Left cardiac atrium (tissue), 4 donors: ENCODE measurements at regions of chr22 and their contacts with region 1.

Region 1: DNA sequence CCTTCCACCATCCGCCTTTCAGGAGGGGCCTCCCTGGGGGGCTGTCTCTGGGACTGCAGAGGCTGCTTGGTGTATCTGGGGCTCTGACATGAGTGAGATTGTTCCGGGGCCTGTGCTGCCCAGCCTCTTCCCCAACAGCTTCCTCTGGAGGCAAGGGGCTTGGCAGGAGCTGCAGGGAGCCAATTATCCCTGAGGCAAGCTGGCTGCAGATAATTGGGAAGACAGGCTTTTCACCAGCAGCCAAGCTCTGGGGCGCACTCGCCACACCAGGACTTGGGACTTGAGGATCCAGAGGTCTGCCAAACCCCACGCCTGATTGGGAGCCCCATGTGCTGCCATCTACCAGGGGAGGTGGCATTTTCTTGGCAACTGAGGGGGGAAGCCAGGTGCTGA is 15.6 kb upstream of the RTN4R start:
- DNase-seq: no peak
- ATAC-seq: no peak

Region 2: GRCh38 chr22:20156611-20157429 is 126.8 kb before region 1 on chr22:
- intact Hi-C with region 1: loop called (anchors 1 to 2 kb)
- DNase-seq: peak; percentile 81
- ATAC-seq: peak; percentile 75 to 83